ENCODE measurements at regions of chr12 and their contacts with region 1.

Region 1: DNA sequence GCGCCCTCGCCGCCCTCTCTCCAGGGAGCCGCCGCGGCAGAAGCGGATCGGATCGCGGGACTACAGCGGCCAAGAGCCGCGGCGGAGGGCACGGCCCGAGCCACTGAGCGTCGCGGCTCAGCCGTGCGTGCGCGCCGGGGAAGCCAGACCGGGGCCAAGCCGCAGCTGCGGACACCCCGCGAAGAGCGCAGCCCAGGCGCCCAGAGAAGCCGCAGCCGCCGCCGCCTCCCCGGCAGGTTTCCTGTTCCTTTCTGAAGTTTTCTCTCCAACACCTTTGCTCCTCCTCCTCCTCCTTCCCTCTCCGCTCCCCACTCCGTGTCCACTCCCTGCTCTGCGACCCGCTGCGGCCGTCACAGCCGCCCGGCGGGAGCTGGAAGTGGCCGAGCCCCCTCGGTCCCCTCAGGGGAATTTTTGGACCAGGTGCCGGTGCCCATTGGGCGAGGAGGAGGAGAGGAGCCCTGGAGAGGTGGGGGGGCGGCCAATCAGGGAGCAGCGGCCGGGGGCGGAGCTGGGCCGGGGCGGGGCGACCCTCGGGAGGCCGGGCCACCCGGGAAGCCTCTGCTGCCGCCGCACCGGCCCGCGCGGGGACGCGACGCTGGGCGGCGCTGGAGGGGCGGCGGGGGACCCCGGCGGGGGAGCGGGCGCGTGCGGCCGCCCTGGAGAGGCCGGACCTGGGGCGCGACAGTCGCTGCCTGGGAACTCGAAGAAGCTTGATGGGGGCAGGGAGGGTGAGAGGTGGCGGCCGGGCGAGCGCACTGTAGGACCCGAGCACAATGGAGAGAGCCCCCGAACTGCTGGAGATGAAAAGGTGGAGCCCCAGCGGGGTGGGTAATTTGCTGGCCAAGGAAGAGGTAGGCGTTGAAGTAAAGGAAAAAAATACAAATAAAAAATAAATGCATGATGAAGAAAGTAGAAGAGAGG is at the start of gene ITPR2:
- DNase-seq: peak; percentile 94
- ATAC-seq: peak; percentile 89
- H3K4me3 Mint-ChIP-seq: peak within 1 kb of the TSS; percentile 96
- H3K27ac Mint-ChIP-seq: peak within 1 kb of the TSS; percentile 99
- H3K4me1 Mint-ChIP-seq: peaks cover 45% of the 10 kb centered on the region
- H3K27me3 Mint-ChIP-seq: no peaks in the 10 kb centered on the region
- CTCF ChIP-seq: no peak
- total RNA-seq, gene ITPR2: 66.3 and 74.5 TPM in 2 replicates

Region 2: DNA sequence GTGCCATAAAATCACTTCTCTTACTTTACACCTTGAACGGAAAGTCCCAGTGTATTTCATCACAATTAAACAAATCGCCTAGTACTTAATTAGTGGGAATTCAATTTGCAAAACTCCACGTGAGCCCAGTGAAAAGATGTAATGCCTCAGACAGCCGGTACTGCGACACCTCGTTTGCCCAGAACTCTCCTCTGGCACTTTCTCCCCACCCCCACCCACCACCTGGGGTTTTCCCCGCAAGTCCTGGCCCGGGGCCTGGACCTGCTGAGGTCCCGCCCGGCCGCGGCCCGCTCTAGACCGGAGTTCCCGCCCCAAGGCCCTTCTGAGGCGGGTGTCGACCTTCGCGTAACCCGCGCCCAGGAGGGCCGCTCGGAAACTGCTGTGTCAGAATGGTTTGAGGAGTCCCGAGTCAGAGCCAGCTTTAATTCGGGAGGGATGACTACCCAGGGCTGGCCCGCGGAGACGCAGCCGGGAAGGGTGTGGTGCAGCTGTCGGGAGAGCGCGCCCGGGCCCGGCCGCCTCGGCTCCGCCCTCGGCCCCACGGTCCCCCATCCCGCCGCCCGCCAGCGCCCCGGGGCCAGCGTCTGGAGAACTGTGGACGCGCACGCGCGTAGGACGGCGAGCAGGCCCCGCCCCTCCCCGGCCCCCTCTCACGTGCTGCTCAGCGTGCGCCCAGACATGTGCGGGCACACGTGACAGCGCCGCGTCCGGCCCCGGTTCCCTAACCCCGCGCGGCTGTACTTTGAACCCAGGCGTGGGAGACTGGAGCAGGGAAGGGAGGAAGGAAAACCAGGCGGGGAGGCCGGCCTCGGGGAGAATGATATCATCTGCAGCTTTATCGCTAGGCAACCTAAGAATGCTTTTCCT is 719.0 kb before region 1 on chr12:
- CTCF ChIA-PET with region 1: interaction called, 3 read pairs
- POLR2A ChIA-PET with region 1: interaction called, 4 read pairs
- intact Hi-C with region 1: loop called (anchors 2 kb)
- DNase-seq: peak; percentile 77
- ATAC-seq: peak; percentile 80
- H3K4me3 Mint-ChIP-seq: peak overlapping the region; percentile 85
- H3K27ac Mint-ChIP-seq: peak overlapping the region; percentile 92
- H3K4me1 Mint-ChIP-seq: peaks cover 58% of the 10 kb centered on the region
- H3K27me3 Mint-ChIP-seq: no peaks in the 10 kb centered on the region
- CTCF ChIP-seq: no peak

Region 3: DNA sequence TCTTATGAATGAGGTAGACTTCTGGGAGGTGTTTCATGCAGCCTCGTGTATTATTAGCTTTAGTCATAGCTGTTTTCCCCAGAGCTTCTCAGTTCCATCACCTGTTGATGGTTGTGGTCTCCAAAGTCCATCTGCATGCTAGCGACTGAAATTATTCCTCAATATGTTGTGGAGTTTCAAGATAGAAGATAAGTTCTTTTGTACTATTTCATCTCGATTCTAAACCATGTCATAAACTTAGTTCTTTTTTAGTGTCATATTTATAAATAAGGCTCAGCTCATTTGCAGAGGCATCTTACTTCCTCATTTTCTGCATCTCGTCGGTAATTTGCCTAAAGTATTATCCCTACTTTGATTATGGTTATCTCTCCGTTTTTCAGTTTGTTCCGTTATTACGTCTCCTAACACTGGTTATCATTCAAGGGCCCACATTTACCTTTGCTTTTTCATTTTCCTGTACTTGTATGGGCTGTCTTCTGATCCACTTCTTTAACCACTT is 119.1 kb before region 1 on chr12:
- CTCF ChIA-PET with region 1: no interaction called
- POLR2A ChIA-PET with region 1: interaction called, 10 read pairs
- intact Hi-C with region 1: loop called (anchors 2 kb)
- DNase-seq: no peak
- ATAC-seq: peak; percentile 64
- H3K4me3 Mint-ChIP-seq: peak overlapping the region; percentile 25
- H3K27ac Mint-ChIP-seq: peak overlapping the region; percentile 38
- H3K4me1 Mint-ChIP-seq: peaks cover 25% of the 10 kb centered on the region
- H3K27me3 Mint-ChIP-seq: no peaks in the 10 kb centered on the region
- CTCF ChIP-seq: no peak

Region 4: DNA sequence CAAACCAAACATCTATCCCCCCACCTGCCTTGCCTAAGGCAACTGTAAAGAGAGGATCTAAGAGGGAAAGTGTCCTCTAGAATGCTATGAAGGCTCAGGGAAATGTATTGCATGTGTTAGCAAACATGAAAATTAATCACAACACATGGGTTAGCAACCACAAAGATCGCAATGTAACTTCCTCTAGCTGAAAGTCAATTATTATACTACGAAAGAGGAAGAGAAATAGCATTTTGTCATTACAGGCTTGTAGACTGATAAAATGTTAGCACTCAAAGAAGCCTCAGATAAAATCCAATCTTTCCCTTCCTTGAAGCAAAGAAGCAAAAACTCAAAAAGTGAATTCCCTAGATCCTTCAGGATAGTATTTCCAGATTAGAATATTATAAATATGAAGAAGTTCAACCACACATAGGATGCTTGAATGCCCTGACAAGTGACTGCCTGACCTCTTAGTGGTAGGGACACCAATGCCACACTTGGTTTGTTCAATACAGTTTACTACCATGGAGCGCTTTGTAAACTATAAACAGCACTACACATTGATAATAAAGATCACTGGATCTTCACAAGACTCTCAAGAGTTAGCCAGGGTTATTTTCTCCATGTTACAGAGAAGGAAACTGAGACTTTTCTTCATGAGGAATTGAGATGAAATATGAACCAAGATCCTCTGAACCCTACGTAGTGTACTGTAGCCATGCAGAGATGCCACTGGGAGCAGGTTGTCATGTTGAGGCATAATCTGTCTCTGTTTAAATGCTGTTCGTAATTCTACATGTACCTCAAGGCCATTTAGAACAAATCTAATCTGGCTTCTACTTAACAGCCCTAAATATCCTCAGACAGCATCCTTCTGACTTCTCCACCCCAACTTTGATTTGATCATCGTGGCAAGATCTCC is 100.8 kb before region 1 on chr12:
- CTCF ChIA-PET with region 1: no interaction called
- POLR2A ChIA-PET with region 1: interaction called, 11 read pairs
- intact Hi-C with region 1: loop called (anchors 5 kb)
- DNase-seq: no peak
- ATAC-seq: peak; percentile 74
- H3K4me3 Mint-ChIP-seq: peak overlapping the region; percentile 52
- H3K27ac Mint-ChIP-seq: peak overlapping the region; percentile 86
- H3K4me1 Mint-ChIP-seq: peaks cover 71% of the 10 kb centered on the region
- H3K27me3 Mint-ChIP-seq: no peaks in the 10 kb centered on the region
- CTCF ChIP-seq: no peak

Region 5: DNA sequence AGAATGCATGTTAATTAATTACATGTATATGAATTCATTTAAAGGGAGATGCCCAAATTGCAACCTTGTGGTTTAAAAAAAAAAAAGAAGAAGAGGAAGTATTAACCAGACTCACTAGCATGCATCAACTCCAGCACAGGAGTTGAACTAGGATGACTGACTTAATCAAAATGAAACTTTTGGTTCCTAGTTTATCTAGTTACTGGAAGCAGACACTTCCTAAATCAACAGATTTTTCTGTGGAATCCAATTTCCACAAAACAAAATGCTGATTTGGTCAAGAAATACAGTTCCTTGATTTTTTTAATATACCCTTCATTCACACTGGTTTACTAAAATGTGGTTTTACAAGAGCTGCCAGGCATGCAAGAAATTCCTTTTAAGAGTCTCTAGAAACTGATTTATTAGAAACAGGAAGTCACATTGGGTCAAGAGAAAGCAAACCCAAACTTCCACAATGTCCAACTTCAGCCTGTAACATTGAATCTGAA is 41.7 kb before region 1 on chr12:
- CTCF ChIA-PET with region 1: no interaction called
- POLR2A ChIA-PET with region 1: interaction called, 7 read pairs
- intact Hi-C with region 1: loop called (anchors 2 kb)
- DNase-seq: no peak
- ATAC-seq: peak; percentile 75
- H3K4me3 Mint-ChIP-seq: no peak overlapping the region
- H3K27ac Mint-ChIP-seq: peak overlapping the region; percentile 46
- H3K4me1 Mint-ChIP-seq: peaks cover 26% of the 10 kb centered on the region
- H3K27me3 Mint-ChIP-seq: no peaks in the 10 kb centered on the region
- CTCF ChIP-seq: no peak

Region 6: DNA sequence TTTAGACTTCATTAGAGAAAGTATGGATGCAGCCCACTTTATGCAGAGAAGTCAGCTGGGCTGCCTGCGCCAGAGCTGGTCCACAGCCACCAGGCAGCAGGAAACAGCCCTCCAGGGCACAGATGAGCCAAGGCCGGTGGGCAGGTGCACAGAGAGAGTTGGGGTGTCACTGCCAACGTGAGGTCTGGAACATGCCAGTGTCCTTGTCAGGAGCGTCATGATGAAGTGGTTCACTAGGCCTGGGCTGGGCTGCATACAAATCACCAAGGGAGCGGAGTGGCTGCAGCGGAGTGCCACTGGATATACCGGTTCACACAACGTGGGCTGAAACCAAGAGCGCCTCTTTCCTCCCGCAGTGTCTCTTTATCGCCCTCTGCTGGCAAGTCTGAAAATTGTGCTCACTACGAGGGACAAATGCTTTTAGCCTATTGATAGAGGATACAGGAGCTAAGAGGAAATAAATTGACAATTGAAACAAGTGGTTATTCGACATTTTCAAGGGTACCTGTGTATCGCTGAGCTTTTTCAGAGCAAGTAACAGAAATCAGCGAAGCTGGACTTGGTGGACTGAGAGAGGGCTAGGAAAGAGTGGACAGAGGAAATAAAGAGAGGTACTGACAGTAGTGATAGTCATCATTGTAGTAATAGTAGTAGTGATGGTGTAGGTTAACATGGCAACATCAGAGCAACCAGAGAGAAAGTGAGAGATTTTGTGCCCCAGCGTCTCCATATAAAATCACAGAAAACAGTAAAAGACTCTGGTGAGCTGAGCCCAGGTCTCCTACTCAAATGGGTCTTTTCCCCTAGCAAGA is 51.9 kb after region 1 on chr12:
- CTCF ChIA-PET with region 1: interaction called, 23 read pairs
- POLR2A ChIA-PET with region 1: interaction called, 10 read pairs
- intact Hi-C with region 1: loop called (anchors 1 kb)
- DNase-seq: peak; percentile 45
- ATAC-seq: peak; percentile 96
- H3K4me3 Mint-ChIP-seq: peak overlapping the region; percentile 76
- H3K27ac Mint-ChIP-seq: peak overlapping the region; percentile 54
- H3K4me1 Mint-ChIP-seq: peaks cover 8% of the 10 kb centered on the region
- H3K27me3 Mint-ChIP-seq: no peaks in the 10 kb centered on the region
- CTCF ChIP-seq: peak; percentile 86

Region 7: DNA sequence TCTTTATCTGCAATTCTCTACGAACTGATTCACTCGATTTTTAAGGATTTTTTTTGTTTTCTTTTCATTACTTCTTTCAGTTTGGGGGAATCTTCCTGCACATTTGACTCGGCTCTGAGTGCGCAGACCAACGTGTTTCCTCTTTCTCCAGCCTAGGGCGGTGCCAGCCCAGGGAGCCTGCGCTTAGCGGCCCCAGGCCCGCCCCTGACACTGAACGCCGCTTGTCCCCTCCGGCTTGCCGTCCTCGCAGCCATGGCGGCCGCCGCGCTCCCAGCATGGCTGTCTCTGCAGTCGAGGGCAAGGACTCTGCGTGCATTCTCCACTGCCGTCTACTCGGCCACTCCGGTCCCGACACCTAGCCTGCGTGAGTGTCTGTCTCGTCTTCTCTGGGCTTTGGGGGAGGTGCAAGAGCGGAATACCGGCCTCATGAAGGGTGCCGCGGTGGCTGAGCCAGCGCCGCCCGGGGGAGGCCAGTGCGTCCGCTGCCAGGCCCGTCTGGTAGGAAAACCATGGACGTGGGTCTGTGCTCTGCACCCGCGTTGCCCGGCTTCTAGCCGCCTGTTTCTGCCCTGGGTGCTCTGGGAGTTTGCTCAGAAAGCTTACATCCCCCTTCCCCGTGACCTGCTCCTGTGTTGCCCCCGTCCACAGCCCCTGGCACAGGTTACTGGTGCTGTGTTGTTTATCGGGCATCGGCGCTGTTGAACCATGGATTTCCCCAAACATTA is 877.7 kb after region 1 on chr12 and contains the start of gene MRPS35:
- CTCF ChIA-PET with region 1: no interaction called
- POLR2A ChIA-PET with region 1: no interaction called
- intact Hi-C with region 1: loop called (anchors 1 kb)
- DNase-seq: peak; percentile 92
- ATAC-seq: peak; percentile 99
- H3K4me3 Mint-ChIP-seq: peak within 1 kb of the TSS; percentile 99
- H3K27ac Mint-ChIP-seq: peak within 1 kb of the TSS; percentile 99
- H3K4me1 Mint-ChIP-seq: peaks cover 29% of the 10 kb centered on the region
- H3K27me3 Mint-ChIP-seq: no peaks in the 10 kb centered on the region
- CTCF ChIP-seq: no peak
- total RNA-seq, gene MRPS35: 36.2 and 36.8 TPM in 2 replicates

Measured in activated B cell treated with CpG ODN at 0.5 μM for 24 hours (primary cell).